CD4-positive, alpha-beta T cell (primary cell): ENCODE measurements at regions of chr18 and their contacts with region 1.

Region 1: DNA sequence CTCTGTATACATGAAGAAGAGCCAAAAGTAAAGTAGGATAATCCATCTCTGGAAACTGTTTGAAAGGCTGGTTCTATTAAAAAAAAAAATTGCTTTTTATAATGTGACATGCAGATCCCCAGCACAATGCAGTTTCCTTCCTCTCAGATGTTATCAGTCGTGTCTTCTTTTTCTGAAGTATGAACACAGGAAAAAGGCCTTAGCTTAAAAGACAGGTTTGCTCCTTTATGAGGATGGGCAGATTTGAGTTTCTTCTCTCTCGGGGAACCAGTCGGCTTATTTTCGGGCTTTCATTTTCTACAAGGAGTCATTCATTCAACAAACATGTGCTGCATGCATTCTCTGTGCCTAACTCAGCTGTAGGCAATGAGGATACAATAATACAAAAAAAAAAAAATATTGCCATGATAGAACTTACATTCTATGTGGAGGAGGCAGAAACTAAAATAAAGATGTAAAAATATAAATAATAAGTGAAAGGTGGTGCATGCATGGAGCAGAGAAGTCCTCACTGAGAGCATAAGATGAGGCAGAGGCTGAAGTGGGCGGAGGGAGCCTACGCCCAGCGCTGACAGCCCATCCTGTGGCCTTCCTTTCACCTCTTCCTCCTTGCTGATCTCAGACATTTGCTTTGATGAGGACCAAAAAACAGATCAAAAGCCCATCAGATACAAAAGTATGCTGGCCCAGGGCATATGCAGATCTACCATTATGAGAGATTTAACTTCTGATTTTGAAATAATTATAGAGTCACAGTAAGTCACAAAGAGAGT is at the start of gene CD226:
- DNase-seq: peak in 6 of 14 experiments; percentile 17 to 78 (median 54)
- ATAC-seq: peak; percentile 75
- H3K4me3 ChIP-seq: peak within 1 kb of the TSS; percentile 57
- H3K4me3 Mint-ChIP-seq: no peak within 1 kb of the TSS
- H3K27ac ChIP-seq: peak within 1 kb of the TSS; percentile 58 to 70
- H3K27ac Mint-ChIP-seq: no peak within 1 kb of the TSS
- H3K4me1 ChIP-seq: peaks cover 66% of the 10 kb centered on the region
- H3K4me1 Mint-ChIP-seq: peaks cover 15% of the 10 kb centered on the region
- H3K27me3 ChIP-seq: no peaks in the 10 kb centered on the region
- H3K27me3 Mint-ChIP-seq: no peaks in the 10 kb centered on the region
- CTCF ChIP-seq: no peak
- total RNA-seq, gene CD226: 74.0 to 74.8 TPM

Region 2: GRCh38 chr18:69968039-69968438 is 20.5 kb after region 1 on chr18:
- CTCF ChIA-PET with region 1: no interaction called
- POLR2A ChIA-PET with region 1: interaction called, 10 read pairs
- intact Hi-C with region 1: no loop called
- DNase-seq: peak in 12 of 14 experiments; percentile 26 to 64 (median 46)
- ATAC-seq: peak; percentile 97
- H3K4me3 ChIP-seq: no peak overlapping the region
- H3K4me3 Mint-ChIP-seq: peak overlapping the region; percentile 25
- H3K27ac ChIP-seq: no peak overlapping the region
- H3K27ac Mint-ChIP-seq: peak overlapping the region; percentile 90
- H3K4me1 ChIP-seq: peaks cover 19% of the 10 kb centered on the region
- H3K4me1 Mint-ChIP-seq: peaks cover 47% of the 10 kb centered on the region
- H3K27me3 ChIP-seq: no peaks in the 10 kb centered on the region
- H3K27me3 Mint-ChIP-seq: no peaks in the 10 kb centered on the region
- CTCF ChIP-seq: no peak